ENCODE measurements at regions of chr10 and their contacts with region 1.

Region 1: GRCh38 chr10:13291061-13291460 is 8.8 kb downstream of the PHYH start:
- DNase-seq: no peak

Region 2: GRCh38 chr10:13310518-13311176 is 19.6 kb after region 1 on chr10:
- intact Hi-C with region 1: loop called in 1 of 2 experiments (anchors 1 kb)
- DNase-seq: peak; percentile 35

Measured in posterior vena cava (tissue), 2 donors.